Heart left ventricle (tissue), 16 donors: ENCODE measurements at regions of chr4 and their contacts with region 1.

Region 1: GRCh38 chr4:38319456-38320342 is 344.3 kb upstream of the KLF3 start:
- DNase-seq: peak; percentile 92 to 96 (median 93)
- ATAC-seq: peak; percentile 80 to 87 (median 82)
- H3K4me3 ChIP-seq: peak overlapping the region in 11 of 12 donors; percentile 4 to 49 (median 40)
- H3K27ac ChIP-seq: peak overlapping the region; percentile 77 to 95 (median 84)
- H3K4me1 ChIP-seq: peaks cover 0 to 46% (median 17%) of the 10 kb centered on the region in 12 donors
- H3K27me3 ChIP-seq: no peaks in the 10 kb centered on the region
- CTCF ChIP-seq: peak; percentile 97 to 99 (median 98)
- POLR2A ChIP-seq: no peak

Region 2: GRCh38 chr4:38062088-38062893 is 257.4 kb before region 1 on chr4:
- intact Hi-C with region 1: loop called in 7 of 10 experiments (anchors 1 to 10 kb)
- DNase-seq: peak; percentile 67 to 85 (median 78)
- ATAC-seq: peak; percentile 46 to 80 (median 66)
- H3K4me3 ChIP-seq: peak overlapping the region in 9 of 12 donors; percentile 31 to 55 (median 39)
- H3K27ac ChIP-seq: peak overlapping the region in 11 of 12 donors; percentile 59 to 83 (median 73)
- H3K4me1 ChIP-seq: peaks cover 0 to 33% (median 17%) of the 10 kb centered on the region in 12 donors
- H3K27me3 ChIP-seq: no peaks in the 10 kb centered on the region
- CTCF ChIP-seq: peak; percentile 81 to 95 (median 88)
- POLR2A ChIP-seq: no peak

Region 3: DNA sequence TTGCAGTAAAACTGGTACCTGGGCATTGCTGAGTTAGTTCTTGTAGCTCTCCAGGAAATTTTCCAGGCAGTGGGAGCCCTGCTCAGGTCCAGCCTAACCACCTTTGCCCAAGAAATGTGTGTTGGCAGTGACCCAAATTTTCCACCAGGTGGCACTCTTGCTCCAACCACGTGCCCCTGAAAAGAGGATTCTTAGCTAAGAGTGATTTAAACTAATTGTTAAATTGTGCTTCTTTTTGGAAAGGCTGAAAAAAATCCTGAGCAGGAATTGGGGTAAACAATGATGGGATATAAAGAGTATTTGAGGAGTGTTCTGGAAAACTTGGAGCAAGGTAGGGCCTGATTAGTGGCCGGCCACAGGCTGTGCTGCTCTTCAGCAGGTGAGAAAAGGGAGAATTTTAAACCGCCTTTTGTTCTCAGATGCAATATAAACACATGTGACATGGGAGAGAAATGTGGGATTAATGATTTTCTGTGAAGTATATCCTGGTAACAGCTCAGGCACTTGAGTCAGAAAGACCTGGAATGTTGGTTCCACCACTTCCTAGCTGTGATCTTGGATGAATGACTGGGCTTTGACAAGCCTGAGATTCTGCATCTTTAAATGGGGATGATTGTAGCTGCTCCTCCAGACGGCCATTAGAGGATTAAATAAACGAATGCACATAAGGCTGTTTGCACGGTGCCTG is 139.9 kb before region 1 on chr4:
- intact Hi-C with region 1: loop called in 9 of 10 experiments (anchors 2 to 10 kb)
- DNase-seq: peak; percentile 54 to 78 (median 68)
- ATAC-seq: peak in 3 of 4 donors; percentile 31 to 68 (median 68)
- H3K4me3 ChIP-seq: no peak overlapping the region
- H3K27ac ChIP-seq: no peak overlapping the region
- H3K4me1 ChIP-seq: peaks cover 0 to 60% (median 19%) of the 10 kb centered on the region in 12 donors
- H3K27me3 ChIP-seq: no peaks in the 10 kb centered on the region
- CTCF ChIP-seq: peak; percentile 89 to 96 (median 92)
- POLR2A ChIP-seq: no peak

Region 4: GRCh38 chr4:38461342-38461741 is 141.6 kb after region 1 on chr4:
- intact Hi-C with region 1: loop called in 2 of 10 experiments (anchors 10 kb)
- DNase-seq: no peak
- ATAC-seq: no peak
- H3K4me3 ChIP-seq: no peak overlapping the region
- H3K27ac ChIP-seq: no peak overlapping the region
- H3K4me1 ChIP-seq: peaks cover 0 to 6% (median 0%) of the 10 kb centered on the region in 12 donors
- H3K27me3 ChIP-seq: no peaks in the 10 kb centered on the region
- CTCF ChIP-seq: no peak
- POLR2A ChIP-seq: no peak

Region 5: GRCh38 chr4:38591617-38592337 is 272.1 kb after region 1 on chr4:
- intact Hi-C with region 1: no loop called
- DNase-seq: no peak
- ATAC-seq: peak in 1 of 4 donors; percentile 13
- H3K4me3 ChIP-seq: no peak overlapping the region
- H3K27ac ChIP-seq: peak overlapping the region in 1 of 12 donors; percentile 69
- H3K4me1 ChIP-seq: peaks cover 0 to 6% (median 0%) of the 10 kb centered on the region in 12 donors
- H3K27me3 ChIP-seq: no peaks in the 10 kb centered on the region
- CTCF ChIP-seq: no peak
- POLR2A ChIP-seq: no peak

Region 6: DNA sequence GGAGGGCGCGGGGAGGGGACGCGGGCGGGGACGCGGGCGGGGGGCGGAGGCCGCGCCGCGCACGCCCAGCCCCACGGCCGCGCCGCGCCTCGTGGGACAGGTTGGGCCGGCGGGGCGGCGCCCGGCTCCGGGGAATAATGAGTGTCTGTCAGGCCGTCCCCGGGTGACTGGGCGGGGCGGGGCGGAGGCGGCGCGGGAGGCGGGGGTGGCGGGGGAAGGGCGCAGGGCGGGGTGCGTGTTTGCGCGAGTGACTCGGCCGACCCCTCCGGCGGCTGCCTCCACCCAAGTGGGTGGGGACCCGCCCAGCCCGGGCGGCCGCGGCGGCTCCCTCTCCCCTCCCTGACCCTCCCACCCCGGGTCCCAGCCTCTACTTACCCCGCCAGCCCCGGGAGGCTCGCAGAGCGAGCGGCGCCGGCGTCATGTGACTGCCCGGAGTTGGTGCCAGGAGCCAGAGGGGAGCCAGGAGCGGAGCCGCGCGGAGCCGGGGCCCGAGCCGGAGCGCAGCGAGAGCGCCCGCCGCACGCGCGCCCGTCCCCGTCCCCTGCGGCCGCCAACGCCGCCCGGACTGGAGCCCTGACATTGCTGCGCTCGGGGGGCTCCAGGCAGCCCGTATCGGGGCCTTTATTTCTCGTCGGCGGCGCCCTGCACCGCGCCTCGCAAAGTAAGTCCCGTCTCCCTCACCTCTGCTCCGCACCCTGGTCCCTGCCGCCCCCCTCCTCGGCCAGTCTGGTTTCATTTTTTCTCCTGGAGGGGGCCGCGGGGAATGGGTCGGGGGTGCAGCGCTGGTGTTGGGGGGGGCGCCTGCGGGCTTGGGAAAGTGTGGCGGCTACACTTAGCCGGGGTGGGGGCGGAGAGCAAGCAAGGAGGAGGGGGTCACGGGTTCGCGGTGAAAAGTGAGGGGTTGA is 344.4 kb after region 1 on chr4 and contains the start of gene KLF3:
- intact Hi-C with region 1: loop called in 2 of 10 experiments (anchors 1 to 2 kb)
- DNase-seq: peak; percentile 95 to 98 (median 96)
- ATAC-seq: peak; percentile 84 to 91 (median 86)
- H3K4me3 ChIP-seq: peak within 1 kb of the TSS; percentile 81 to 98 (median 92)
- H3K27ac ChIP-seq: peak within 1 kb of the TSS; percentile 97 to 100 (median 100)
- H3K4me1 ChIP-seq: peaks cover 0 to 54% (median 33%) of the 10 kb centered on the region in 12 donors
- H3K27me3 ChIP-seq: no peaks in the 10 kb centered on the region
- CTCF ChIP-seq: no peak
- POLR2A ChIP-seq: peak in 1 of 2 donors; percentile 92
- total RNA-seq, gene KLF3: 17.8 to 36.4 (median 21.1) TPM

Region 7: DNA sequence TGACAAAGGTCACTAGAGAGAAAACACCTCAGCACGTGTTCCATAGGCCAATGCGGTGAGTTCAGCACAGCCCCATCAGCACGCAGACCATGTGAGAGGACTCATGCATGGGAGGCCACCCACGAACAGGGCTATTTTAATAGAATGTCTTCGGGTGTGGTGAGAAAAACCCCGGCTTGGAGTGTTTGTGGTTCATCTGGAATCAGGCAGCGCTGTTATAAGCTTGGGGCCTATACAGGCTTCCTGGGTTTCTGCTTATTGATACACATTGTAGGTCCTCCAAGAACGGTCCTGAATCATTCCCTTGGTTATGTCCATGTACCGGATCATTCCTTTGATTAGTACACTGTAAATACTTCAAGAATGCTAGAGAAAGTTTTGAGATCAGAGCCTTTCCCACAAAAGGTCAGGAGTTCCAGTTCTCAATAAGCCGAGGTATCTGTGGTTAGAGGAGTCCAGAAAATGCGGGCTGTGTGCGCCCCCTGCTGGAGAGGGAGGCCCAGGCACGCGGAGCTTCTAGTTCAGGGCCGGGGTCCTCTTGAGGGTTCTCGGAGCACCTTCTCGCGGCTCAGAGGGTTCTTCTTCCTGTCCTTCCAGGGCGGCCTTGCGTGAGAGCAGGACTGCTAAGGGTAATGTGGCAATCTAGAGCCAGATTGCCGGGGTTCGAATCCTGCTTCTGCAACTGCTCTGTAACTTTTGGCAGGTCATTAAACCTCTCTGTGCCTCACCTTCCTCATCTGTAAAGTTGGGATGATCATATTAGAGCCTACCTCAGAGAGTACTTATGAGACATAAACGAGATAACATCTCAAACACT is 411.3 kb after region 1 on chr4:
- intact Hi-C with region 1: loop called in 7 of 10 experiments (anchors 1 to 10 kb)
- DNase-seq: peak; percentile 76 to 90 (median 79)
- ATAC-seq: peak; percentile 78 to 91 (median 89)
- H3K4me3 ChIP-seq: no peak overlapping the region
- H3K27ac ChIP-seq: no peak overlapping the region
- H3K4me1 ChIP-seq: peaks cover 0 to 21% (median 4%) of the 10 kb centered on the region in 12 donors
- H3K27me3 ChIP-seq: no peaks in the 10 kb centered on the region
- CTCF ChIP-seq: peak; percentile 88 to 98 (median 96)
- POLR2A ChIP-seq: no peak